ENCODE measurements at regions of chr18 and their contacts with region 1.

Region 1: GRCh38 chr18:6543330-6543908 is 128.7 kb upstream of the L3MBTL4 start:
- DNase-seq: no peak
- H3K4me3 ChIP-seq: no peak overlapping the region
- H3K27ac ChIP-seq: no peak overlapping the region
- H3K4me1 ChIP-seq: peaks cover 0 to 4% (median 0%) of the 10 kb centered on the region in 6 donors
- H3K27me3 ChIP-seq: no peaks in the 10 kb centered on the region
- CTCF ChIP-seq: peak in 7 of 11 experiments; percentile 28 to 57 (median 44)
- POLR2A ChIP-seq: no peak

Region 2: GRCh38 chr18:6401687-6402086 is 141.7 kb before region 1 on chr18:
- intact Hi-C with region 1: no loop called
- DNase-seq: no peak
- H3K4me3 ChIP-seq: no peak overlapping the region
- H3K27ac ChIP-seq: no peak overlapping the region
- H3K4me1 ChIP-seq: peaks cover 0 to 28% (median 8%) of the 10 kb centered on the region in 6 donors
- H3K27me3 ChIP-seq: no peaks in the 10 kb centered on the region
- CTCF ChIP-seq: no peak
- POLR2A ChIP-seq: no peak

Region 3: DNA sequence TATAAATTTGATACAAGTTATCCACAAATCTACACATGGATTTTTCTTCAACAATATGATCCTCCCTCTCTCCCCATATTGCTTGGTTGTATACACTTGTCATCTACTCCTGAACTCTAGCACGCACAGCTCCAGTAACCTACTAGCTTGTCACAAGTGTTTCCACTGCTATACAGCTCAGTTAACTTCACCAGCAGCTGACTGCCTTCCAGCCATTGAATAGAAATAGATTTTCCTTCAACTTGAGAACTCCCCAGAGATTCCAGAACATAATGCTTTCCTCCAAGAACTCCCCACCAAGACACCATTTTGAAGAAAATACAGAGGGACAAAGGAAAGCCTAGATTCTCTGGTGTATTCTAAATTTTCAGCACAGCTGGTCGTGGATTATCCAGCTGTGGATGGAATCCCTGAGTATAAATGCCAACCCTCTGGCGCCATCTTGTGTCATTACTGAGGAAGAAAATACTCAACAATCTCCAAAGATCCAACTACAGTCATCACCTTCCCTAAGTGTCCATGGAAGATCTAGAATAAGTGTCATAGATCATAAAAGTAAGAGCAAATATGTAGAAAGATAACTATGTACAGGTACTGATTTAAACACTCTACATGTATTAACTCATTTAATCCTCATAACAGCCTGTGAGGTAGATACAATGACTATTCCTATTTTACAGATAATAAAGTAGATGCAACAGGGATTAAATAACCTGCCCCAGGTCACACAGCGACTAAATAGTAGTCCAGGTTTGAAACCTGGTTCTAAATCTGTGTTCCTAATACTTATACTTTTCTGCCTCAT is 342.8 kb after region 1 on chr18:
- intact Hi-C with region 1: loop called (anchors 5 kb)
- DNase-seq: no peak
- H3K4me3 ChIP-seq: no peak overlapping the region
- H3K27ac ChIP-seq: peak overlapping the region in 1 of 8 donors; percentile 27
- H3K4me1 ChIP-seq: peaks cover 0 to 7% (median 0%) of the 10 kb centered on the region in 6 donors
- H3K27me3 ChIP-seq: no peaks in the 10 kb centered on the region
- CTCF ChIP-seq: peak in 9 of 11 experiments; percentile 15 to 67 (median 54)
- POLR2A ChIP-seq: no peak